ENCODE measurements at regions of chr18 and their contacts with region 1.

Region 1: DNA sequence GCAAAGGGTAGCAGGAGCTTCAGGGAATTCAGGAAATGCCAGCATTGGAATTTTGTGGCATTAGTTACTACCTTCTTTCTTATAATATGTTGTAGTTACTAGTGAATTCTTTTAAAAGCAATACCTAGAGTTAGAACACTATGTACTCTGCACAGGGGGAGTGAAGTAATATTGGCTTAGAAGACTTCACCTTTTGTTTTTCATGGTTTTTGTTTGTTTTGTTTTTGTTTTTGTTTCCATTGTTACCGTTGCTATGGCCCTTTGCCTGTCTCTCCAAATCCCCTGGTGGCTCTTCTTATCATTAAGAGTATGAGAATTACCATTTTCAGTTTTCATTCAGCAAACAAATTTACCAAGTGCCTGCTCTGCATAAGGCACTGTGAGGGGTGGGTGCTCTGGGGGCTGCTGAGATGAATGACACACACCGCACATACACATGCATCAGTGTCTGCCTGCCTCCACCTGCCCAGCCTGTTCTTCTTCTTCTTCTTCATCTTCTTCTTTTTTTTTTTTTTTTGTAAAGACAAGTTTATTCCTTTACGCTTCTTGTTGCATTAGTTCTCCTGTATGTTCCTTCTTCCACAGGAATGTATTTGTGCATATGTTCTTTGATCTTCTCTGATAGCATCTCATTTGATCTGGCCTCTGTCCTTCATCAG is 160.2 kb downstream of the HAUS1 start:
- DNase-seq: no peak
- ATAC-seq: no peak
- H3K4me3 Mint-ChIP-seq: no peak overlapping the region
- H3K27ac Mint-ChIP-seq: no peak overlapping the region
- H3K4me1 Mint-ChIP-seq: peaks cover 19% of the 10 kb centered on the region
- H3K27me3 Mint-ChIP-seq: no peaks in the 10 kb centered on the region
- CTCF ChIP-seq: no peak

Region 2: DNA sequence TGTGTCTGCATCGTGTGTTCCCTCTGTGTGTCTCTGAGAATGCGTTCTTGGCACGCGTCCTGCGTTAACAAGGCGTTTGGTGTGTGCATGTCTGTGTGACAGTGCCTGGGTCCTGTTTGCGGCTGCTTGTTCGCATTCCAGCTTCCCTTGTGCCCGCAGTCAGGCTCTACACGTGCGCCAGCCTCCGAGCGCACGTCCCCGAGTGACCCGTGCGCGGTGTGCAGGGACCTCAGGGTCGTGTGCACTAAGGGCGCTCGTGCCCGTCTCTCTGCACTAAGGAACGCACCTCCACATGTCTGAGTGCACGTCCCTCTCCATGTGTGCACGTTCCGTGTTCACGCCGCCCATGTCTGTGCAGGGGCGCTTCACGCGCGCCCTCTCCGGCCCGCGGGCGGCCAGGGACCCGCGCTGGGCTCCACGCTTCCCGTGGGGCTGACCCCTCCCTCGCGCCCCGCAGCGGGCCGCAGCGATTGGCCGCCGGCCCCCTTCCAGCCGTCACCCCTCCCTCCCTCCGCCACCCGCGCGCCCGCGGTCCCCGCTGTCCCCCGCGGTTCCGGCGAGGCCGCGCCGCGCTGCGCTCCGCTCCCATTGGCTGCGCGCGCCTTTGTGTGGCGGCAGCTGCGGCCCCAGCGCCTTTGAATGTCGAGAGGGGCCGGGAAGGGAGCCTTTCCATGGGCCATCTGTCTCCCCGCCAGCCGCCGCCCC is 69.2 kb after region 1 on chr18:
- CTCF ChIA-PET with region 1: no interaction called
- POLR2A ChIA-PET with region 1: no interaction called
- intact Hi-C with region 1: no loop called
- DNase-seq: no peak
- ATAC-seq: no peak
- H3K4me3 Mint-ChIP-seq: no peak overlapping the region
- H3K27ac Mint-ChIP-seq: no peak overlapping the region
- H3K4me1 Mint-ChIP-seq: peaks cover 21% of the 10 kb centered on the region
- H3K27me3 Mint-ChIP-seq: peaks cover 53% of the 10 kb centered on the region
- CTCF ChIP-seq: no peak

Region 3: DNA sequence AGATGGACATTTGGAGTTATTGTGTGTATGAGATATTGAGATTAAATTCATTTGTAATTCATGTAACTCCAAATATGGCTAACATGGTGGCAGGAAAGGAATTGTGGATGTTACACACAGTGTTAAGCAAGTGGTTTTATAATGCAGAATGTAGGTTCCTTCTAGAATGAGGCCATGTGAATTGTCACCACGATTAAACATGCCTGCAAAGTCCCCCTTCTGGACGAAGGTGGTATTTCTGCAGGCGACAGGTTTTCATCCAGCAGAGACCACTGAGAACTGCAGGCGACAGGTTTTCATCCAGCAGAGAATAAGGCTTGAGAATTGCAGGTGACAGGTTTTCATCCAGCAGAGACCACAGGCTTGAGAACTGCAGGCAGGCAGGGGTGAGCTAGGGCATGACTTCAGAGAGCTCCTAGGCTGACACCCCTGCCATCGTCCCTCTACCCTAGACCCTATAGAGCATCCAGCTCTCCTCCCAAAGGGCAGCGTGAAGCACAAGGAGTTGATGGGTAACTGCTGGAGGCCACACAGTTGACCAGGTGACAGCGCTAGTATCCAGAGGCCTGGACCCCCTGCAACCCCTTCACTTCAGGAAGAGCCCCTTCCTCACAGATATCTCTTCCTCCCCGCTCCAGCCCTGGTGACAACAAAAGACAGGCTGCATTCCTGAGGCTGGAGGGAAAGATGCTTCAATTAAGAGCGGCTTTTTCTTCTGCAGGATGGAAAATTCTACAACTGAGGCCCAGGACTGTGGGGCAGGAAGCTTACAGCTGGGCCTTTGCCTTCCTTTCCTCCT is 216.9 kb after region 1 on chr18:
- CTCF ChIA-PET with region 1: no interaction called
- POLR2A ChIA-PET with region 1: no interaction called
- intact Hi-C with region 1: no loop called
- DNase-seq: no peak
- ATAC-seq: peak; percentile 45
- H3K4me3 Mint-ChIP-seq: no peak overlapping the region
- H3K27ac Mint-ChIP-seq: no peak overlapping the region
- H3K4me1 Mint-ChIP-seq: no peaks in the 10 kb centered on the region
- H3K27me3 Mint-ChIP-seq: peaks cover 13% of the 10 kb centered on the region
- CTCF ChIP-seq: no peak

Region 4: GRCh38 chr18:47689371-47689770 is 1425.0 kb after region 1 on chr18:
- CTCF ChIA-PET with region 1: no interaction called
- POLR2A ChIA-PET with region 1: interaction called, 15 read pairs
- intact Hi-C with region 1: no loop called
- DNase-seq: no peak
- ATAC-seq: no peak
- H3K4me3 Mint-ChIP-seq: no peak overlapping the region
- H3K27ac Mint-ChIP-seq: no peak overlapping the region
- H3K4me1 Mint-ChIP-seq: peaks cover under 1% of the 10 kb centered on the region
- H3K27me3 Mint-ChIP-seq: no peaks in the 10 kb centered on the region
- CTCF ChIP-seq: no peak

Measured in activated B cell treated with CpG ODN at 0.5 μM for 24 hours (primary cell).